ENCODE measurements at regions of chr12 and their contacts with region 1.

Region 1: DNA sequence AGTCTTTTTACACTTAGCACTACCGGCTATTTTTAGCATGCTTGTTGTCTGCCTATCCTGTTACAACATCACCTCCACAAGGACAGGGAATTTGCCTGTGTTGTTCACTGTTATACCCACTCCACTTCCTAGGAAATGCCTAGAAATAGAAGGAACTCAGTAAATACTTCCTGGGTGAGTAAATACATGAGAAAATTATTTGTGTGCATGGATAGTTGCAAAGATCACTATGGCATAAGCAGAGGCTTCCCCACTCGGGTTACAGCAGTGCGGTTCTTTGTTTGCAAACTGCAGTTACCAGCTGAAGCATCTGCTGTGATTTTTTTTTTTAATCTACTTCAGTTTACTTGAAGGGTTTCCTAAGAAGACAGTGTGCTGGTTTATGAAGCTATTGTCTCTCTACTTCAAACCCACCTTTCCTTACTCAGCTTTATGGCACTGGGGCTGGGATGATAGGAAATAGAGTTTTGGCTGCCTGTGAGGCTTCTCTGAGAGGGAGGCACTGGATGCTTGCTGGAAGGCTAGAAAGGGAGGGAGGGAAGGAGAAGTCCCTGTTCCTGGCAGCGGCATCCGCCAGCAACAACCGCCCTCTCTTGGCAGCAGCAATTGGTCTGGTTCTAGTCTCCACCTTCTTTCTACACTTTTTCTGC is 29.0 kb downstream of the PDE6H start:
- DNase-seq: no peak
- H3K4me3 ChIP-seq: peak overlapping the region in 3 of 4 donors; percentile 7 to 24 (median 15)
- H3K27ac ChIP-seq: peak overlapping the region; percentile 53 to 73 (median 60)
- H3K4me1 ChIP-seq: peaks cover 9 to 30% (median 17%) of the 10 kb centered on the region in 4 donors
- H3K27me3 ChIP-seq: no peaks in the 10 kb centered on the region
- CTCF ChIP-seq: no peak
- EP300 ChIP-seq: no peak
- POLR2A ChIP-seq: no peak

Region 2: DNA sequence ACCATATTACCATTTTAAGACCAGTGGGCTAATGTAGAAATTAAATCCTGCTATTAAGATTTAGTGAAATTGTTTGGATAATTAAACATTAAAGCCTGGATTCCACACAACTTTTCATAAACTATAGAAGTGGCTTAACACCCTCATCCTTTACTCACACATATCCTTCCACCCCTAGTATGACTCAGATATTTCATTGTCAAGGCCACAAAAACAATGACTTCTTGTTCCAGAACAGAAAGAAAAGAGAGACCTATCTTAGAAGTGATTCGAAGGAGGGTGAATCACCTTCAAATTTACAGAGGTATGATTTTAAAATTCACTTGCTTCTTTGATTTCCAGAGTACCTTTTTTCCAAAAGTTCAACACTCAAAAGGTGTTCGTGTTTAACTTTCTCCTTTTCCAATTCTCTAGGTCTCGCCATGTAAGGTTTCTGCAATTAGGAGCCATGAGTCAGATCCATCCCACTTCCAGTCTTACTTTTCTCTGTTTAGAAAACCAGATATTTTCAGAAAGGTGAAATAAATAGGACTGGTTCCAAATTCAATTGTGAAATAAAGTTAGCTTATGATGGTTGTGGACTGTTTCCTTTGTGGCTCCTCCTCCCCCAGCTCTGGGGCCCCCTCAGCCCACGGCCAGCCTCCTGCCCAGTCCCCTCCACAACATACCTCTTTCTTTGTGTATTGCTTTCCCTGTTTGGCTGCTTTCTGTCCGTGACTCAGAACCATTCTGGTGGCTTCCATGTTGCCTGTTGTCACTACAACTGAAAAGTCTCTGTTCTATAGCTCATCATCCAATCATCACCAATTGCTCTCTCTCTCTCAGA is 91.6 kb before region 1 on chr12:
- intact Hi-C with region 1: no loop called
- DNase-seq: no peak
- H3K4me3 ChIP-seq: no peak overlapping the region
- H3K27ac ChIP-seq: no peak overlapping the region
- H3K4me1 ChIP-seq: peaks cover 12 to 33% (median 20%) of the 10 kb centered on the region in 4 donors
- H3K27me3 ChIP-seq: no peaks in the 10 kb centered on the region
- CTCF ChIP-seq: no peak
- EP300 ChIP-seq: no peak
- POLR2A ChIP-seq: no peak

Region 3: GRCh38 chr12:15151161-15152120 is 149.6 kb after region 1 on chr12:
- intact Hi-C with region 1: loop called (anchors 10 kb)
- DNase-seq: no peak
- H3K4me3 ChIP-seq: no peak overlapping the region
- H3K27ac ChIP-seq: peak overlapping the region in 2 of 4 donors; percentile 22 to 33
- H3K4me1 ChIP-seq: peaks cover 12 to 53% (median 44%) of the 10 kb centered on the region in 4 donors
- H3K27me3 ChIP-seq: no peaks in the 10 kb centered on the region
- CTCF ChIP-seq: peak; percentile 56 to 65 (median 65)
- EP300 ChIP-seq: no peak
- POLR2A ChIP-seq: no peak

Region 4: DNA sequence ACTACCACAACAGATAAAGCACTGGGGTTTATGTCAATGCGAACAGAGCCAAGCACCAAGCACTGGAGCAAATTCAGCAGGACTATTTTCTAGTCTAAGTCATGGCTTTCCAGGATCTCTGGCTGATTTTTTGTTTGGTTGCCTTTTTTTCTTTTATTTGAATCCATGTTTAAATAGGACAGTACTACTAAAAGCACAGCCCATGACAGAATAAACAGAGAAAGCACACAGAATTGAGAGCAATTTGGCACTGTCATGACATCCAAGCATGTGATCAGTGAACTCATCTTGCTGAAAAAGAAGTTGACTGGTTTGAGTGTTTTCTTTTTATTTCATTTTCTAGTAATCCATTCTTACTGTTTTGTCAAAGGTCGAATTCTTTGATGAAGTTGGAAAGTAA is 242.5 kb after region 1 on chr12:
- intact Hi-C with region 1: no loop called
- DNase-seq: no peak
- H3K4me3 ChIP-seq: no peak overlapping the region
- H3K27ac ChIP-seq: no peak overlapping the region
- H3K4me1 ChIP-seq: no peaks in the 10 kb centered on the region
- H3K27me3 ChIP-seq: no peaks in the 10 kb centered on the region
- CTCF ChIP-seq: no peak
- EP300 ChIP-seq: no peak
- POLR2A ChIP-seq: no peak